AG04449 (cell line): ENCODE measurements at regions of chr19 and their contacts with region 1.

Region 1: DNA sequence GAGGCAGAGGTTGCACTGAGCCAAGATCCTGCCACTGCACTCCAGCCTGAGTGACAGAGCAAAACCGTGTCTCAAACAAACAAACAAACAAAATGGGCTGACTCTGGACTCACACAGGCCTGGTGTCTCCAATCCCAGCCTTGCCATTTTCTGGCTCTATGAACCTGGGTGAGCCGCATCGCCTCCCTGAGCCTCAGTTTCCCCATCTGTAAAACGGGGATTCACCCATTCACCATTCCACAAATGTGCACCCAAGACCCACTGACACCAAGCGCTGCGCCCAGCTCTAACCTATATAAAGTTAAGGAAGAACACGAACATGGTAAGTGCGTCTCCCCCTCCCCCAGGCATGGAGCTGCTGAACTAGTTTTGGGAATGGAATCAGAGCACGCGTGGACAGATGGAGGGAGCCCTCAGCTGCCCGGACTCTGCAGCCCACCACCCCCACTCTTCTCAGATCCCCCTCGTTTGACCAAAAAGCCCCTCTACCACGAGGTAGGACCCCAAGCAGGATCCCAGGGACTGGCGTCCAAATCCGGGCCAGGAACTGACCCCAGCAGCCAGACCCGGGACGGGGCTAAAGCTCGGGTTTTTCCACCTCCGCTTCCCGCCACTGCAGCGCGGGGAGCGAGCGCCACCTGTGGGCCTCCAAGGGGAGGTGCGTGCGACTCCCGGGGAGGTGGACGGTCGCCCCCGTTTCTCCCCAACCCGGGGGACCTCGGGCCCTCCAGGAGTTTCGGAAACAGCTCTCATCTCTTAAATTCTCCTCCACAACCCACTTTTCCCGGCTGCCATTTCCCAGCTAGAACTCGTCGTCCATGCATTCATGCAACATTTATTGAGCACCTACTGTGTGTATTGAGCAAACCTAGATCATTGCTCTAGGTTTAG is 33.0 kb upstream of the ADGRE5 start:
- DNase-seq: no peak
- H3K4me3 ChIP-seq: peak overlapping the region; percentile 50
- CTCF ChIP-seq: peak; percentile 98

Region 2: DNA sequence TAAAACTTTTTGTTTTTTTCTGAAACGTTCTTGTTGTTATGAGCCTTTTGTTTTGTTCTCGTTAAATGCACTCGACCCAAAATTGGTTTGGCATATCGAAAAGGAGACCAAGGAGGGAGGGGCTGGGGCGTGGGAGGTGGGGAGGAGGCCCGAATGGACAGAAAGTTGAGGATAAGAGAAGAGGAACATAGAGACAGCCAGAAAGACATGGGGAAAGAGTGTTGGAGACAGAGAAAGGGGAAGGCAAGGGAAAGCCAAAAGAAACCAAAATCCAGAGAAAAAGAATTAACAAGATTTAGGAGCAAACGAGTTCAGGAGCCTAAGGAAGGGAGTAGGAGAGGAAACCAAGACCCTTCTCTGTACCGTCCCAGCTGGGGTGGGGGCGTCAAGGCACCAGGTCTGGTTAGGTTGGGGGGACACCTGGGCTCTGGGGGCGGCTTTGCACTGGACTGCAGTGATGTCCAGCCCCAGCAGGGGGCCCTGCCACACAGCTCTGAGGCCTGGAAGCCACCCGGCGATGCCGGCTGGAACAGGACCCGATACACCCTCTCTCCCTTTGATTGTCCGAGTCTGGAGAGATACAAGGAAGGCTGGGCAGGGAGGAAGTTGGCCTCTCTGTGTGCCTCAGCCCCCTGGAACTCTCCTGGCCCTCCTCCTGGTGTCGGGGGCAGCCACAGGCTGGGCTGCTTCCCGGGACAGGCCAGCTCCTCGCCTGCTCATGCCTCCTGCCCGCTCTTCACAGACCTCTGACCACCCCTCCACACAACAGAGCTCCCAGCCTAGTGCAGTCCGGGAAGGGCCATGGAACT is 200.2 kb before region 1 on chr19:
- CTCF ChIA-PET with region 1: interaction called, 101 read pairs
- POLR2A ChIA-PET with region 1: no interaction called
- DNase-seq: no peak
- H3K4me3 ChIP-seq: no peak overlapping the region
- CTCF ChIP-seq: peak; percentile 91

Region 3: GRCh38 chr19:14183741-14184350 is 164.4 kb before region 1 on chr19:
- CTCF ChIA-PET with region 1: interaction called, 22 read pairs
- POLR2A ChIA-PET with region 1: interaction called, 3 read pairs
- DNase-seq: no peak
- H3K4me3 ChIP-seq: no peak overlapping the region
- CTCF ChIP-seq: no peak

Region 4: DNA sequence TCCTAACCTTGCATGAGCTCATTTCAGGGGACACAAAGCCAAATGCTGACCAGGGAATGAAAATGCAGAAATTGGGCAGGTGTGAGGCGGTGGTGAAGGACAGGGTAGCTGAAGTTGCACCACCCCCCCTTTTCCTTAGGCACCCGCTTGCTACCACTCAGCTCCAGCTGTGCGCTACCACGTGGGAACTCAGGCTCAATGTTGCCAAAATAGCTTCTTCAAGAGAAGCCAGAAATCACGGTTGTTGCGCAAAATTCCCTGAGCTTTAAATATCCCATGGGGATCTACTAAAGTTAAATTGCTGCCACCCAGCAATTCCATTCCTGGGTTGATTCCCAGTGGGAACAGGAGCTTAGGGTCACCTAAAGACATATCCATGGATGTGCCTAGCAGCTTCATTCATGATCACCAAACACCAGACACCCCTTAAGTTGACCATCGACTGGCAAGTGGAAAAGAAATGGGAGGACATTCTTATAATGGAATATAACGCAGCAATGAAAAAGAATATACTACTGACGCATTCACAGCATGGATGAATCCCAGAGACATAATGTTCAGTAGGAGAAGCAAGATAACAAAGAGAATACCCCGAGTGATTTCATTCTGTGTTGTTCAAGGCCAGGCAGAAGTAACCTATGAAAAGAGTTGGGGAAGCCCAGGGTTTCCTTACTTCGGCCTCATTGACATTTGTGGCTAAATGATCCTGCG is 129.5 kb before region 1 on chr19:
- CTCF ChIA-PET with region 1: interaction called, 16 read pairs
- POLR2A ChIA-PET with region 1: no interaction called
- DNase-seq: no peak
- H3K4me3 ChIP-seq: no peak overlapping the region
- CTCF ChIP-seq: no peak

Region 5: DNA sequence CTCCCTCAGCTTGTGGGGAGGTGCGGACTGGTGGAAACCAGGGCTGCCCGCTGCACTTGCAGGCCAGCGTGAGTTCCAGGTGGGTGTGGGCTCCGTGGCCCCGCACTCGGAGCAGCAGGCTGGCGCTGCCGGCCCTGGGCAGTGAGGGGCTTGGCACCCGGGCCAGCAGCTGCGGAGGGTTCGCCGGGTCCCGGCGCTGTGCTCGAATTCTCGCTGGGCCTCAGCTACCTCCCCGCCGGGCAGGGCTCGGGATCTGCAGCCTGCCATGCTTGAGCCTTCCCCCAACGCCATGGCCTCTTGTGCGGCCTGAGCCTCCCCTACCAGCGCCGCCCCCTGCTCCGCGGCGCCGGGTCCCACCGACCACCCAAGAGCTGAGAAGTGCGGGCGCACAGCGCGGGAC is 70.6 kb before region 1 on chr19:
- CTCF ChIA-PET with region 1: no interaction called
- POLR2A ChIA-PET with region 1: no interaction called
- DNase-seq: no peak
- H3K4me3 ChIP-seq: no peak overlapping the region
- CTCF ChIP-seq: no peak

Region 6: GRCh38 chr19:14363183-14364097 is 15.2 kb after region 1 on chr19:
- CTCF ChIA-PET with region 1: interaction called, 77 read pairs
- POLR2A ChIA-PET with region 1: no interaction called
- DNase-seq: peak; percentile 41
- H3K4me3 ChIP-seq: peak overlapping the region; percentile 40
- CTCF ChIP-seq: no peak

Region 7: GRCh38 chr19:14405758-14406644 is 57.8 kb after region 1 on chr19:
- CTCF ChIA-PET with region 1: interaction called, 24 read pairs
- POLR2A ChIA-PET with region 1: no interaction called
- DNase-seq: no peak
- H3K4me3 ChIP-seq: no peak overlapping the region
- CTCF ChIP-seq: peak; percentile 85

Region 8: GRCh38 chr19:14425696-14426138 is 77.5 kb after region 1 on chr19:
- CTCF ChIA-PET with region 1: no interaction called
- POLR2A ChIA-PET with region 1: no interaction called
- DNase-seq: no peak
- H3K4me3 ChIP-seq: no peak overlapping the region
- CTCF ChIP-seq: no peak